MCF 10A (cell line): ENCODE measurements at regions of chr11 and their contacts with region 1.

Region 1: GRCh38 chr11:119717839-119718534 is 11.0 kb downstream of the NECTIN1 start:
- DNase-seq: no peak
- H3K4me3 Mint-ChIP-seq: no peak overlapping the region
- H3K27ac Mint-ChIP-seq: no peak overlapping the region
- H3K4me1 Mint-ChIP-seq: peaks cover 40% of the 10 kb centered on the region
- H3K27me3 Mint-ChIP-seq: no peaks in the 10 kb centered on the region
- CTCF ChIP-seq: no peak

Region 2: GRCh38 chr11:119701591-119702549 is 16.1 kb before region 1 on chr11:
- CTCF ChIA-PET with region 1: interaction called, 16 read pairs
- POLR2A ChIA-PET with region 1: interaction called, 5 read pairs
- intact Hi-C with region 1: no loop called
- DNase-seq: no peak
- H3K4me3 Mint-ChIP-seq: no peak overlapping the region
- H3K27ac Mint-ChIP-seq: peak overlapping the region; percentile 88
- H3K4me1 Mint-ChIP-seq: peaks cover 39% of the 10 kb centered on the region
- H3K27me3 Mint-ChIP-seq: no peaks in the 10 kb centered on the region
- CTCF ChIP-seq: no peak

Region 3: DNA sequence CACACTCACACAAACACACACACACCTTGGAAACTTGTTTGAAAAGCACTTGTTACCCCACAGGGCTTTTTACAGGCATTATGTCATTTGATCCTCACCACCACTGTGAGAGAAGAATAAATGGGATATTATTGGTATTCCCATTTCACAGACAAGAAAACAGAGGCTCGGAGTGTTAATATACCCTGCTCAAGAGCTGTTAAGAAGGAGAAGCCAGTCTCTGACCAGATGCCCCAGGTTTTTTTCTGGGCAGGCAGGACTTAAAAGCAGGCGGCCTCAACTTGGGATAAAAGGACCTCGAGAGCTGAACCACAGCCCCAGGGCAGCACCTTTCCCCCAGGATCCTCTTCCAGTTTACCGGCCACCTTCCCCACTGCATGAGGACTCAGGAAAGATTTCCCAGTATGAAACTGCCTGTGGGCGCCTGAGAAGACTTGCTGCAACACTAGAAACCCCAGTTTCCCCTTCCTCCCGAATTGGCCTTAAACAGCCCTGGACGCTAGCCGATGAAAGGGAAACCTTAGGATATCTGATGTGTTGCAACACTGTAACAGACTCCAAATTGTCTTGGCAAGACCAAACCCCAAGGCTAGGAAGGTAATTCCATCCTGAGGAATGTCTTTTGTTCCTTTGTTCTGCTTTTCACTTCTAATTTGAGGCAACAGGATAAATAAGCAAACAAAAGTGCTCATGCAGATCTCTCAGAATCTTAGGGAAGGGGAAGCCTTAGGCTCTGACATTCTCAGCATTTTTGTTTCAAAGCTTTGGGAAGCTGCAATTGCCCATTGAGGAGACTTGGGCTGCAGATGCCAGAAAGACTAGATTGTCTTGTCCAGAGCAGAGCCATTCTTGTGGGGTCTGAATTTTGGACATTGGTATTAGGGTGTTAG is 246.4 kb after region 1 on chr11:
- CTCF ChIA-PET with region 1: no interaction called
- POLR2A ChIA-PET with region 1: no interaction called
- intact Hi-C with region 1: no loop called
- DNase-seq: peak; percentile 14
- H3K4me3 Mint-ChIP-seq: no peak overlapping the region
- H3K27ac Mint-ChIP-seq: no peak overlapping the region
- H3K4me1 Mint-ChIP-seq: no peaks in the 10 kb centered on the region
- H3K27me3 Mint-ChIP-seq: peaks cover 85% of the 10 kb centered on the region
- CTCF ChIP-seq: no peak